ENCODE measurements at regions of chr21 and their contacts with region 1.

Region 1: DNA sequence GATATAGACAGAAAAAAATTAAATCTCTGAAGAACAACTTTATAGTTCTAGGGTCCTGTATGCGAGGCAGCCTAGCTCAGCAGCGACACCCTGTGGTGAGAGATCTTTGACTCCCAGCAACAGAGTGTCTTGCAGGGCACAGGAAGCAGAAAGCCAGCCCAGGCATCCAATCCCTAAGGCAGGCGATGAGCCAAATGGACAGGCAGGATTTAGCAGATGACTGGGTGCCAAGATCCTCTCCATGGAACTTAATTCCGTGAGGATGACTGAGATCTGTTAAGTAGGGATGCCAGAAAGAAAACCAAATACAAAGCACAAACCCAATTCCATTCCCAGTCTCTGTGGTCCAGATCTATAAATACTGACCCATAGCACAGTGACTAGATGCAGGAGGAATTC is 38.8 kb downstream of the HLCS start:
- DNase-seq: peak; percentile 76 to 78
- H3K4me3 ChIP-seq: no peak overlapping the region
- H3K27ac ChIP-seq: no peak overlapping the region
- H3K4me1 ChIP-seq: no peaks in the 10 kb centered on the region
- H3K27me3 ChIP-seq: no peaks in the 10 kb centered on the region
- CTCF ChIP-seq: peak; percentile 67 to 93 (median 78)
- POLR2A ChIP-seq: no peak

Region 2: DNA sequence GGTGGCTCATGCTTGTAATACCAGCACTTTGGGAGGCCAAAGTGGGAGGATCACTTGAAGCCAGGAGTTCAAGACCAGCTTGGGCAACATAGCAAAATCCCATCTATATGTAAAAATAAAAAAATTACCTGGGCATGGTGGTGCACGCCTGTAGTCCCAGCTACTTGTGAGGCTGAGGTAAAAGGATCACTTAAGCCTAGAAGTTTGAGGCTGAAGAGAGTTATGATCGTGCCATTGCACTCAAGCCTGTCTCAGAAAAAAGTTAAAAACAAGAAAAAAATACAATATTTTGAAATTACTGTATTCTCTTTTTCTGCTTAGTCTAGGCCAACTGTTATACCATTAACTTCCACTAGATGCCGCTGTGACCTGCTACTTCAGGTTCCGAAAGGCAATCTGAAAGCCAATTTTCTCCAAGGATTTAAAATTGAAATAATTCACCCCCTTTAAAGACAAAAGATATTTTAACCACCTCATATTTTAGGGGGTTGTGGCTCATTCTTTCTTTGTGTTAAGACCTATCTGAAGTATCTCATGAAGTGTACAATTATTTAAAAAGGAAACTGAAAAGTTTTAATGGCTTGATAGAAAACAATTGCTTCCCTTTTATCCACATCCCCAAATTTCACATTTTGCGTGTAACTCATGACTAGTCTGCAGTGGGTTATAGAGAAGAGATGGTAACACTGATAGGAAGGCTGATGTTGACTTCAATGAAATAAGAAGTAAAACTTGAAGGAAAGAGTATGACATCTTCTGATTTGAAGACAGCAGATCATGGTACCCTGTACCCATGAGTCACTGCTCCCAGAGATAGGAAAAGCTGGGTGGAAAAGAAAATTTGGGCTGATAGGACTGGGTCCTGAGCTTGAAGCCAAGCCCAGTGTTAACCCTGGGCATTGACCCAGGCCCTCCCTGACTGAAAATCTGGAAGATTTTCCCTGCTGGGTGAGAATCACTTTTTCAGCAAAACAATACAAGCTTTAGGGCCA is 423.4 kb before region 1 on chr21:
- intact Hi-C with region 1: loop called (anchors 10 kb)
- DNase-seq: peak; percentile 26 to 30
- H3K4me3 ChIP-seq: no peak overlapping the region
- H3K27ac ChIP-seq: no peak overlapping the region
- H3K4me1 ChIP-seq: peaks cover 0 to 8% of the 10 kb centered on the region in 2 donors
- H3K27me3 ChIP-seq: no peaks in the 10 kb centered on the region
- CTCF ChIP-seq: peak; percentile 76 to 94 (median 90)
- POLR2A ChIP-seq: no peak

Region 3: DNA sequence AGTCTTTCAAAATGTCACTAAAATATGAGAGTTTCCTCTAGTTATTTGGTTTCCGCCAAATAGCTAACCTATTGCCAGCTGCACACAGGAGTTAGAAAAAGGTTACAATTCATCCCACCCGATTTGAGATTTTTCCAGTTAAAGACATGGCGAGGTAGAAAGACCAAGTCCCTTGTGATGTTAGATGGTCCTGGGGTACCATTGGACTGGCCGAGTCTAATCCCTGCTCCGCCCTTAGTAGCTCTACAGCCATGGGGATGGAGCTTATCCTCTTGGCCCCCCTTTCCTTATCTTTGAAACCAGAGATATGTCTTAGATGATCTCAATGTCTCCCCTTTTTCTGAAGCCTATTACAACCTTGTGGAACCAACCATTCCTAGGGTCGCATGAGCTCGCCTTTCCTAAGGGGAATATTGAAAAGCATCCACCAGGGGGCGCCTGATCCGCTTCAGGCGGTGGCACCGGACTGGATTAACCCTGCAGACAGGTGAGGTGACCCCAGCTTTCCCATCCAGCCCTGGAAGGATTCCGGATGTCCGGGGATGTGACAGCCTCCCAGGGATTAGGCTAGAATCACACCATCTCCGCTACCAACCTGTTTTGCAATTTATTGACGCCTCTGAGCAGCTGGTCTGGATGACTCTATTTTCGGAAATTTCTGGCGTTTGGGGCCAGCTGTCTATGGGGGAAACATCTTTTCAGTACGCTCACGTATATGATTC is 297.1 kb before region 1 on chr21:
- intact Hi-C with region 1: loop called (anchors 10 kb)
- DNase-seq: peak; percentile 50 to 69
- H3K4me3 ChIP-seq: no peak overlapping the region
- H3K27ac ChIP-seq: no peak overlapping the region
- H3K4me1 ChIP-seq: no peaks in the 10 kb centered on the region
- H3K27me3 ChIP-seq: no peaks in the 10 kb centered on the region
- CTCF ChIP-seq: peak; percentile 29 to 79 (median 48)
- POLR2A ChIP-seq: no peak

Region 4: DNA sequence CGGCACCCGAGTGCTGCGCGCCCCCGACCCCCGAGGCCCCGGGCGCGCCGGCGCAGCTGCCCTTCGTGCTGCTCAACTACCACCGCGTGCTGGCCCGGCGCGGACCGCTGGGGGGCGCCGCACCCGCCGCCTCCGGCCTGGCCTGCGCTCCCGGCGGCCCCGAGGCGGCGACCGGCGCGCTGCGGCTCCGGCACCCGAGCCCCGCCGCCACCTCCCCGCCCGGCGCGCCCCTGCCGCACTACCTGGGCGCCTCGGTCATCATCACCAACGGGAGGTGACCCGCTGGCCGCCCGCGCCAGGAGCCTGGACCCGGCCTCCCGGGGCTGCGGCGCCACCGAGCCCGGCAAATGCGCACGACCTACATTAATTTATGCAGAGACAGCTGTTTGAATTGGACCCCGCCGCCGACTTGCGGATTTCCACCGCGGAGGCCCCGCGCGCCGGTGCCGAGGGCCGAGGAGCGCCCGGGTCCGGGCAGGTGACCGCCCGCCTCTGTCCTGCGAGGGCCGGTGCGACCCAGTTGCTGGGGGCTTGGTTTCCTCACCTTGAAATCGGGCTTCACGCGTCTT is 179.8 kb before region 1 on chr21:
- intact Hi-C with region 1: loop called (anchors 10 kb)
- DNase-seq: peak; percentile 37 to 44
- H3K4me3 ChIP-seq: peak overlapping the region in 1 of 3 donors; percentile 24
- H3K27ac ChIP-seq: no peak overlapping the region
- H3K4me1 ChIP-seq: peaks cover 13% of the 10 kb centered on the region in 2 donors
- H3K27me3 ChIP-seq: no peaks in the 10 kb centered on the region
- CTCF ChIP-seq: peak in 2 of 6 experiments; percentile 22 to 31
- POLR2A ChIP-seq: no peak

Region 5: DNA sequence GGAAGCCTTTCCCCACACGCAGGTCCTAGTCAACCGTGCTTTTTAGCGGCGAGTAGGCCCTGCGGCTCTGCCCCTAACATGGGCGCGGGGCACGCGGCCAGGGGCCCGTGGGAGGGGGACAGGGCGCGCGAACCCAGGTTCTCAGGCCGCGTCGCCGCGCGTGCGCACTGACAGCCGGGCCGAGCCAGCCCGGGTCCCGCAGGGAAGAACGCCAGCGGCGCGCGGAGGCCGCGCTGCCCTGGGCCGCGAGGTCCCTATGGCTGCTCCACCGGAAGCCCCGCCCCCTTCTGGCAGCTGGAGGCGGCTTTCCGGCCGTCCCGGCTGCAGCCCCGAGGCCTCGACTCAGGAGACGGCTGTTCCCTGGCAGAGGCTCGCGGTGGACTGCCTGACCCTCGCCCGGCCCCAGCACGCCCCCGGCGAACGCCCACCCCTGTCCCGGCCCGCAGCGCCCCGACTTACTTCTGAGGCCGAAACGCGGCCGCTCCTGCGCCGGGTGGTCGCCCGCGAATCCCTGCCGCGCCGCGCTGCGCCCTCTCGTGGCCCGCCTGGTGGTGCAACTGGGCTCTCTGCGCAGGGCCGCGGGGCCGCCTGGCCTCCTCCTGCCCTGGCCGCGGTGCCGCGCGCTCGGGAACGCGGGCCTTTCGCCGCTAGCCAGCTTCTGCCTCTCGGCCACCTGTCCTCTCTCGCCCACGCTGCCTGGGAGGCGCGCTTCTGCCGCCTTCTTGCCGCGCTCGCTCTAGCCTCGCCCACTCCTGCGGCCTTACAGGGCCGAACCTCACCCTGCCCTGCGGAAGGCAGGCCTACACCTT is 62.2 kb after region 1 on chr21:
- intact Hi-C with region 1: no loop called
- DNase-seq: peak; percentile 95
- H3K4me3 ChIP-seq: peak overlapping the region in 2 of 3 donors; percentile 36 to 65
- H3K27ac ChIP-seq: peak overlapping the region; percentile 88 to 97 (median 96)
- H3K4me1 ChIP-seq: peaks cover 0 to 5% of the 10 kb centered on the region in 2 donors
- H3K27me3 ChIP-seq: no peaks in the 10 kb centered on the region
- CTCF ChIP-seq: peak; percentile 21 to 98 (median 82)
- POLR2A ChIP-seq: peak in 1 of 2 donors; percentile 57